T-cell (primary cell): ENCODE measurements at regions of chrX and their contacts with region 1.

Region 1: GRCh38 chrX:41491267-41492004 is 44.3 kb downstream of the NYX start:
- DNase-seq: no peak
- ATAC-seq: no peak
- H3K4me3 ChIP-seq: no peak overlapping the region
- H3K4me3 Mint-ChIP-seq: no peak overlapping the region
- H3K27ac ChIP-seq: no peak overlapping the region
- H3K27ac Mint-ChIP-seq: no peak overlapping the region
- H3K4me1 ChIP-seq: no peaks in the 10 kb centered on the region
- H3K4me1 Mint-ChIP-seq: no peaks in the 10 kb centered on the region
- H3K27me3 ChIP-seq: no peaks in the 10 kb centered on the region
- H3K27me3 Mint-ChIP-seq: peaks cover 0 to 16% of the 10 kb centered on the region in 2 donors

Region 2: GRCh38 chrX:41304178-41304577 is 187.3 kb before region 1 on chrX:
- CTCF ChIA-PET with region 1: no interaction called
- POLR2A ChIA-PET with region 1: interaction called in 1 of 2 experiments, 10 read pairs
- DNase-seq: no peak
- ATAC-seq: no peak
- H3K4me3 ChIP-seq: no peak overlapping the region
- H3K4me3 Mint-ChIP-seq: no peak overlapping the region
- H3K27ac ChIP-seq: no peak overlapping the region
- H3K27ac Mint-ChIP-seq: no peak overlapping the region
- H3K4me1 ChIP-seq: no peaks in the 10 kb centered on the region
- H3K4me1 Mint-ChIP-seq: no peaks in the 10 kb centered on the region
- H3K27me3 ChIP-seq: no peaks in the 10 kb centered on the region
- H3K27me3 Mint-ChIP-seq: peaks cover 0 to 11% of the 10 kb centered on the region in 2 donors